ENCODE measurements at regions of chr13 and their contacts with region 1.

Region 1: GRCh38 chr13:30395192-30396084 is 26.9 kb upstream of the UBE2L5 start:
- DNase-seq: peak; percentile 95
- ATAC-seq: peak; percentile 89
- H3K4me3 ChIP-seq: peak overlapping the region; percentile 78 to 87
- H3K27ac ChIP-seq: peak overlapping the region; percentile 14 to 43
- H3K4me1 ChIP-seq: no peaks in the 10 kb centered on the region
- H3K27me3 ChIP-seq: no peaks in the 10 kb centered on the region

Region 2: GRCh38 chr13:29817604-29818378 is 577.6 kb before region 1 on chr13:
- intact Hi-C with region 1: no loop called
- DNase-seq: no peak
- ATAC-seq: no peak
- H3K4me3 ChIP-seq: no peak overlapping the region
- H3K27ac ChIP-seq: no peak overlapping the region
- H3K4me1 ChIP-seq: peaks cover 2% of the 10 kb centered on the region in 2 donors
- H3K27me3 ChIP-seq: no peaks in the 10 kb centered on the region

Region 3: GRCh38 chr13:30341815-30342570 is 53.4 kb before region 1 on chr13:
- intact Hi-C with region 1: loop called (anchors 5 kb)
- DNase-seq: peak; percentile 92 to 96
- ATAC-seq: peak; percentile 91
- H3K4me3 ChIP-seq: no peak overlapping the region
- H3K27ac ChIP-seq: peak overlapping the region; percentile 63 to 88
- H3K4me1 ChIP-seq: peaks cover 2 to 15% of the 10 kb centered on the region in 2 donors
- H3K27me3 ChIP-seq: no peaks in the 10 kb centered on the region

Region 4: GRCh38 chr13:30446126-30446500 is 50.7 kb after region 1 on chr13:
- intact Hi-C with region 1: loop called in 1 of 2 experiments (anchors 5 kb)
- DNase-seq: no peak
- ATAC-seq: peak; percentile 23
- H3K4me3 ChIP-seq: no peak overlapping the region
- H3K27ac ChIP-seq: peak overlapping the region in 1 of 2 donors; percentile 61
- H3K4me1 ChIP-seq: no peaks in the 10 kb centered on the region
- H3K27me3 ChIP-seq: no peaks in the 10 kb centered on the region